Heart left ventricle (tissue), 16 donors: ENCODE measurements at regions of chr15 and their contacts with region 1.

Region 1: GRCh38 chr15:87576486-87577208 is 679.9 kb downstream of the NTRK3 start:
- DNase-seq: no peak
- ATAC-seq: no peak
- H3K4me3 ChIP-seq: no peak overlapping the region
- H3K27ac ChIP-seq: no peak overlapping the region
- H3K4me1 ChIP-seq: no peaks in the 10 kb centered on the region
- H3K27me3 ChIP-seq: no peaks in the 10 kb centered on the region
- CTCF ChIP-seq: no peak
- POLR2A ChIP-seq: no peak

Region 2: DNA sequence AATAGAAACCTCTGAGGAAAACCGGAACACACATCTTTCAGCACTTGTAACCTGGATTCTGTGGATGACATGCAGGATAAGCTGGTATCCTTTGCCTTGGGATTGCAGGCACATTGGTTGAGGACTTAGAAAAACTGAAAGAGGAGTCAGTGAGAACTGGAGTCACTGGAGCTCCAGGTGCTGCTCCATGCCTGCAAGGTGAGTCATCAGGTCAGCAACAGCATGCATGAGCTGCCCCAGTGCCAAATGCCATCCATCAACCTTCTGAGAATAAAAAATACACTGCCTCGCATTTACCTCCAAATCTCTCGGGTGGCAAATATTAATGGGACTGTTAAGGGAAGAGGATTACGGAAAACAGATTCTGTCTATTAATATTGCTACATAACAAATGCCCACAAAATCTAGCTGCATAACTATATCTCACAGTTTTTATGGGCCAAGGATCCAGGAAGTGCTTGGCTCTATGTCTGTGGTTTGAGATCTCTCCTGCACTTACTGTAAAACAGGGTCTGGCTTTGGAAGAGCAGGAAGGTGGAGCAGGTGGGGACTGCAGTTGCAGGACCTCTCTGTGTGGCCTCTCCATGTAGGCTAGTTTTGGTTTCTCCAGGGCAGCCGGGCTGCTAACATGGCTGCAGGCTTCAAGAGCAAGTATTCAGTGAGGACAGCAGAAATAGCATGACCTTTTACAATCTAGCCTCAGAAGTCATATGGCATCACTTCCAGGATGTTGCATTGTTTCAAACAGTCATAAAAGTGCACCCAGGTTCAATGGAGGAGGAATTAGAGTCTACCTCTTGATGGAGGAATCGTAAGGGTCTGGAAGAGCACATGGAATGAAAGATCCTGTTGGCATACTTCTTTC is 49.0 kb before region 1 on chr15:
- intact Hi-C with region 1: loop called in 1 of 10 experiments (anchors 5 kb)
- DNase-seq: no peak
- ATAC-seq: peak in 2 of 4 donors; percentile 71 to 74
- H3K4me3 ChIP-seq: no peak overlapping the region
- H3K27ac ChIP-seq: no peak overlapping the region
- H3K4me1 ChIP-seq: peaks cover 0 to 5% (median 0%) of the 10 kb centered on the region in 12 donors
- H3K27me3 ChIP-seq: no peaks in the 10 kb centered on the region
- CTCF ChIP-seq: no peak
- POLR2A ChIP-seq: no peak

Region 3: GRCh38 chr15:87661483-87662345 is 85.1 kb after region 1 on chr15:
- intact Hi-C with region 1: no loop called
- DNase-seq: no peak
- ATAC-seq: no peak
- H3K4me3 ChIP-seq: no peak overlapping the region
- H3K27ac ChIP-seq: no peak overlapping the region
- H3K4me1 ChIP-seq: no peaks in the 10 kb centered on the region
- H3K27me3 ChIP-seq: no peaks in the 10 kb centered on the region
- CTCF ChIP-seq: no peak
- POLR2A ChIP-seq: no peak